A549 (cell line): ENCODE measurements at regions of chr15 and their contacts with region 1.

Region 1: GRCh38 chr15:45705510-45706473 is 71.0 kb downstream of the SQOR start:
- DNase-seq: peak; percentile 20 to 79
- ATAC-seq: peak; percentile 84 to 96
- H3K4me3 ChIP-seq: peak overlapping the region; percentile 48
- H3K27ac ChIP-seq: peak overlapping the region; percentile 69 to 83
- H3K4me1 ChIP-seq: peaks cover 3% of the 10 kb centered on the region; the same call in 1 of the 3 replicates
- CTCF ChIP-seq: peak; percentile 69
- EP300 ChIP-seq: no peak
- POLR2A ChIP-seq: no peak
- RAD21 ChIP-seq: peak; percentile 58 to 75

Region 2: DNA sequence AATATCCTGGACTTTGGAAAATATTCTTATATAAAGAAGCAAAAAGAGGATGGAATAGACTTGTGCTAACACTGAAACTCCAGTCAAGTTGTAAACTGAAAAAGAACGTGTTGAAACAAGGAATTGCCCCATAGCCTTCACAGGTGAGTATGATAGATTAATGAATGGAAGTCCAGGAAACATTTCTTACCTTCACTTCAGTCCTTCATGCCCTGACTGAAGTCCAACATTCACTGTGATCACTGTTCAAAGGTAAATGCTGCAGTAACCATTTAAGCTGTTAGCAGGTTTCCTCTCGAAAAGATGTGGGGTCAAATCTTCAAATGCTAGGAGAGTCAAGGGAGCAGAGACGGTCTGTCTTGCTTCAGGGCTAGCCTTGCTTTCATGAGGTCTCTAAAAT is 229.4 kb before region 1 on chr15:
- CTCF ChIA-PET with region 1: no interaction called
- POLR2A ChIA-PET with region 1: no interaction called
- DNase-seq: no peak
- ATAC-seq: no peak
- H3K4me3 ChIP-seq: no peak overlapping the region
- H3K27ac ChIP-seq: no peak overlapping the region
- H3K4me1 ChIP-seq: no peaks in the 10 kb centered on the region
- CTCF ChIP-seq: no peak
- EP300 ChIP-seq: no peak
- POLR2A ChIP-seq: no peak
- RAD21 ChIP-seq: no peak

Region 3: GRCh38 chr15:45495588-45495987 is 210.2 kb before region 1 on chr15:
- CTCF ChIA-PET with region 1: no interaction called
- POLR2A ChIA-PET with region 1: no interaction called
- DNase-seq: no peak
- ATAC-seq: no peak
- H3K4me3 ChIP-seq: no peak overlapping the region
- H3K27ac ChIP-seq: no peak overlapping the region
- H3K4me1 ChIP-seq: no peaks in the 10 kb centered on the region
- CTCF ChIP-seq: no peak
- EP300 ChIP-seq: no peak
- POLR2A ChIP-seq: no peak
- RAD21 ChIP-seq: no peak

Region 4: GRCh38 chr15:45641374-45641781 is 64.4 kb before region 1 on chr15:
- CTCF ChIA-PET with region 1: interaction called, 11 read pairs
- POLR2A ChIA-PET with region 1: no interaction called
- DNase-seq: peak; percentile 81 to 93
- ATAC-seq: peak; percentile 89 to 91
- H3K4me3 ChIP-seq: peak overlapping the region; percentile 29; the same call in 2 of the 3 replicates
- H3K27ac ChIP-seq: peak overlapping the region; percentile 94 to 96
- H3K4me1 ChIP-seq: peaks cover 90% of the 10 kb centered on the region
- CTCF ChIP-seq: no peak
- EP300 ChIP-seq: peak; percentile 84 to 94; a peak in 3 of 5 replicates
- POLR2A ChIP-seq: no peak
- RAD21 ChIP-seq: 0 out of 5 replicates have a peak, but pooled peaks of 1 of the 2 experiments have one; percentile 34

Region 5: GRCh38 chr15:45690581-45691260 is 15.1 kb before region 1 on chr15:
- CTCF ChIA-PET with region 1: interaction called, 10 read pairs
- POLR2A ChIA-PET with region 1: no interaction called
- DNase-seq: no peak
- ATAC-seq: no peak
- H3K4me3 ChIP-seq: no peak overlapping the region
- H3K27ac ChIP-seq: no peak overlapping the region
- H3K4me1 ChIP-seq: no peaks in the 10 kb centered on the region
- CTCF ChIP-seq: no peak
- EP300 ChIP-seq: no peak
- POLR2A ChIP-seq: no peak
- RAD21 ChIP-seq: no peak

Region 6: GRCh38 chr15:45732662-45733061 is 26.9 kb after region 1 on chr15:
- CTCF ChIA-PET with region 1: no interaction called
- POLR2A ChIA-PET with region 1: no interaction called
- DNase-seq: no peak
- ATAC-seq: no peak
- H3K4me3 ChIP-seq: no peak overlapping the region
- H3K27ac ChIP-seq: no peak overlapping the region
- H3K4me1 ChIP-seq: no peaks in the 10 kb centered on the region
- CTCF ChIP-seq: no peak
- EP300 ChIP-seq: no peak
- POLR2A ChIP-seq: no peak
- RAD21 ChIP-seq: no peak

Region 7: DNA sequence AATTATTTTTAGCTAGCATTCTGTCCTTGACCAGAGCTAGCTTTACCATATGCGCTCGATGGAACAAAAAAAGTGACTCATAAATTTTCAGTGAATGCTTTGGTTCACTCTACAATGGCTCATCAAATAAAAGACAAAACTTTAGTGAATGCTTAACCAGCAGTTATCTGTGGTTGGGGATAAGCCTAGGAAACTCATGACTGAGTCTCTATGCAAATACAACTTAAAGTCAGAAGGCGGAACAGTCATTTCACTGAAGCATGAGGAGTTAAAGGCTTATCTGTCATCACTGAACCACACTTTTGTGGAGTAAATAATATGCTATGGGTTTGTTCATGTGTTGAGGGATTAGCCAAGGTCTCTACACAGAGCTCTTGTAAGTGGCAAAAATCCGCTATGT is 237.4 kb after region 1 on chr15:
- CTCF ChIA-PET with region 1: no interaction called
- POLR2A ChIA-PET with region 1: no interaction called
- DNase-seq: peak in 1 of 2 experiments; percentile 41
- ATAC-seq: peak; percentile 54 to 74; a peak in 4 of 6 replicates
- H3K4me3 ChIP-seq: no peak overlapping the region
- H3K27ac ChIP-seq: no peak overlapping the region
- H3K4me1 ChIP-seq: no peaks in the 10 kb centered on the region
- CTCF ChIP-seq: no peak
- EP300 ChIP-seq: no peak
- POLR2A ChIP-seq: no peak
- RAD21 ChIP-seq: no peak